ENCODE measurements at regions of chr11 and their contacts with region 1.

Region 1: GRCh38 chr11:44036811-44037657 is 10.7 kb upstream of the ACCSL start:
- DNase-seq: peak; percentile 83 to 95 (median 87)
- H3K4me3 ChIP-seq: no peak overlapping the region
- H3K27ac ChIP-seq: no peak overlapping the region
- H3K4me1 ChIP-seq: peaks cover 0 to 7% (median 0%) of the 10 kb centered on the region in 3 donors
- H3K27me3 ChIP-seq: no peaks in the 10 kb centered on the region
- CTCF ChIP-seq: peak; percentile 81

Region 2: DNA sequence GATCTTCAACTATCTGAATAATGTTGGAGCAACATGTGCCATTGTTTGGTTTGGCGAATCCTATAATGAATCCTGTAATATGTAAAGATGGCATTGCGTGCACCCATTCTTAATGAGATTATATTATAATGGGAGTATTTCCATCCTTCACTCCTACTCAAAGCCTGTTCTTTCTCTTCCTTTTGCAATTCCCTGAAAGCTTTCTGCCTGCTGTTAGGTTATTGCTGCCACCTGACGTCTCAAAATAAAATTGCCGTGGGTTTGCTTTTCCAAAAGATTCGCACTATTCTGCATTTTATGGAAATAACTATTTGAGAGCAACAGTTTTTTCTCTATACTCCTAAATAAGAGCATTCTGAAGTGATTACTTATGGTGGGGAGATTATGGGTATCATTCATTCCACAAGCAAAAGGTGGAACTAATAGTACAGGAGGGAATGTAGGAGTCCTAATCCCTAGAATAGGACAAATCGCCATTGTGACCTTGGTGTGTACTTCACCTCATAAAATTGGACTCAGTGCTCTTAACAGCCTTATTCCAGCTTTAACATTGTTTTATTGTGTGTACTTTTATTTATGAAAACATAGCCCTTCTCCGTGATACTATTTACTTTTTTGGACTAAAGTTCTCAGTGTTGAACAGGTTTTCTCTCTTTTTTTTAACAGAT is 226.0 kb before region 1 on chr11:
- intact Hi-C with region 1: no loop called
- DNase-seq: peak in 1 of 5 donors; percentile 15
- H3K4me3 ChIP-seq: no peak overlapping the region
- H3K27ac ChIP-seq: no peak overlapping the region
- H3K4me1 ChIP-seq: no peaks in the 10 kb centered on the region
- H3K27me3 ChIP-seq: no peaks in the 10 kb centered on the region
- CTCF ChIP-seq: peak; percentile 31

Region 3: DNA sequence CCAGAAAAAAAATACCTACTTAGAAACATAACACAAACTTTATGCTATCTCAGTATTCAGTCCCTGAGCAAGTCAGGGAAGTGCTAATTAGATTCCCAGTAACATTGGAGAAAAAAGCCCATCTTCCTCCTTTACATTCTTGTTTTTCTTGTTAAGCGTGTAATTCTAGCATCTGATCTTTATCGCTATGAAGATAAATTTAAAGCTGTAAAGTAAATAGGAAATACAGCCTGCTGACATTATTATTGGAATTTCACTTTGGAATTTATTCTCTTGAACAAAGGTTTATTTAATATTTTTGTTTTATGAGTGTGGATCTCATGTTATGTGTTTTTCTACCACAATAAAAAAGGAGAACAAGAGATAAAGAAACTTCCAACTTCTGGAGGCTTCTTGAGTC is 142.5 kb before region 1 on chr11:
- intact Hi-C with region 1: loop called (anchors 5 kb)
- DNase-seq: peak in 1 of 5 donors; percentile 45
- H3K4me3 ChIP-seq: no peak overlapping the region
- H3K27ac ChIP-seq: no peak overlapping the region
- H3K4me1 ChIP-seq: no peaks in the 10 kb centered on the region
- H3K27me3 ChIP-seq: no peaks in the 10 kb centered on the region
- CTCF ChIP-seq: no peak

Region 4: GRCh38 chr11:43944761-43945311 is 92.2 kb before region 1 on chr11:
- intact Hi-C with region 1: loop called (anchors 10 kb)
- DNase-seq: peak in 2 of 5 donors; percentile 64 to 87
- H3K4me3 ChIP-seq: peak overlapping the region in 2 of 3 donors; percentile 64 to 74
- H3K27ac ChIP-seq: peak overlapping the region; percentile 90 to 94
- H3K4me1 ChIP-seq: peaks cover 0 to 12% (median 0%) of the 10 kb centered on the region in 3 donors
- H3K27me3 ChIP-seq: peaks cover 13% of the 10 kb centered on the region
- CTCF ChIP-seq: peak; percentile 49

Region 5: GRCh38 chr11:43987384-43988039 is 49.5 kb before region 1 on chr11:
- intact Hi-C with region 1: no loop called
- DNase-seq: peak; percentile 60 to 98 (median 68)
- H3K4me3 ChIP-seq: no peak overlapping the region
- H3K27ac ChIP-seq: peak overlapping the region; percentile 85 to 91
- H3K4me1 ChIP-seq: peaks cover 0 to 24% (median 14%) of the 10 kb centered on the region in 3 donors
- H3K27me3 ChIP-seq: no peaks in the 10 kb centered on the region
- CTCF ChIP-seq: no peak

Region 6: GRCh38 chr11:44309483-44310205 is 272.6 kb after region 1 on chr11 and contains the start of gene ALX4:
- intact Hi-C with region 1: no loop called
- DNase-seq: peak in 4 of 5 donors; percentile 51 to 76 (median 64)
- H3K4me3 ChIP-seq: no peak within 1 kb of the TSS
- H3K27ac ChIP-seq: no peak within 1 kb of the TSS
- H3K4me1 ChIP-seq: peaks cover 0 to 7% (median 0%) of the 10 kb centered on the region in 3 donors
- H3K27me3 ChIP-seq: peaks cover 84% of the 10 kb centered on the region
- CTCF ChIP-seq: no peak
- total RNA-seq, gene ALX4: 0.16 TPM

Measured in kidney (tissue), 22 donors.